CD4-positive, alpha-beta T cell (primary cell): ENCODE measurements at regions of chr4 and their contacts with region 1.

Region 1: GRCh38 chr4:77203380-77204197 is 46.6 kb downstream of the CCNG2 start:
- DNase-seq: peak; percentile 36 to 85 (median 56)
- ATAC-seq: peak; percentile 74
- H3K4me3 ChIP-seq: no peak overlapping the region
- H3K4me3 Mint-ChIP-seq: no peak overlapping the region
- H3K27ac ChIP-seq: no peak overlapping the region
- H3K27ac Mint-ChIP-seq: no peak overlapping the region
- H3K4me1 ChIP-seq: peaks cover 4% of the 10 kb centered on the region
- H3K4me1 Mint-ChIP-seq: no peaks in the 10 kb centered on the region
- H3K27me3 ChIP-seq: no peaks in the 10 kb centered on the region
- H3K27me3 Mint-ChIP-seq: no peaks in the 10 kb centered on the region
- CTCF ChIP-seq: peak; percentile 89

Region 2: GRCh38 chr4:76430519-76431388 is 772.8 kb before region 1 on chr4:
- CTCF ChIA-PET with region 1: interaction called, 3 read pairs
- POLR2A ChIA-PET with region 1: no interaction called
- intact Hi-C with region 1: loop called (anchors 1 to 2 kb)
- DNase-seq: peak in 4 of 14 experiments; percentile 3 to 57 (median 40)
- ATAC-seq: no peak
- H3K4me3 ChIP-seq: no peak overlapping the region
- H3K4me3 Mint-ChIP-seq: no peak overlapping the region
- H3K27ac ChIP-seq: no peak overlapping the region
- H3K27ac Mint-ChIP-seq: no peak overlapping the region
- H3K4me1 ChIP-seq: peaks cover 3% of the 10 kb centered on the region
- H3K4me1 Mint-ChIP-seq: no peaks in the 10 kb centered on the region
- H3K27me3 ChIP-seq: peaks cover 2 to 8% of the 10 kb centered on the region in 2 experiments
- H3K27me3 Mint-ChIP-seq: peaks cover 16% of the 10 kb centered on the region
- CTCF ChIP-seq: peak; percentile 79

Region 3: DNA sequence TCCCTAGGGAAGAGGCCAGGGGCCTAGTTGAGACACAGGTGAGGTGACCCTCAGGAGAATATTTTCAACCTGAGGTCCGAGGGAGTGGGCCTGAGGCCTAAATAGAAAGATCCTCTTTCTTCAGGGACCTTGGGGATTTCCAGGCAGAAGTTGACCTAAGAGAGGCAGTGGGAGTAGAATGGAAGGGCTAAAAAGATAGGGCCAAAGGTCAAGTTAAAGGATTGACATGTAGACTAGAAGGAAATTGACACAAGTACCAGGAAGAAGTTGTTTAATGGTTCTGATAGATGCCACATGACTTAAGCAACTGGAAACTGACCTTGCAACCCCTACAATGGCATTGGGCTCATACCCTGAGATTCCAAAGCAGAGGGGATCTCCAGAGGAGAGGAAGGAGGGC is 691.6 kb before region 1 on chr4:
- CTCF ChIA-PET with region 1: no interaction called
- POLR2A ChIA-PET with region 1: no interaction called
- intact Hi-C with region 1: loop called in 1 of 2 experiments (anchors 2 kb)
- DNase-seq: no peak
- ATAC-seq: no peak
- H3K4me3 ChIP-seq: no peak overlapping the region
- H3K4me3 Mint-ChIP-seq: no peak overlapping the region
- H3K27ac ChIP-seq: no peak overlapping the region
- H3K27ac Mint-ChIP-seq: no peak overlapping the region
- H3K4me1 ChIP-seq: no peaks in the 10 kb centered on the region
- H3K4me1 Mint-ChIP-seq: no peaks in the 10 kb centered on the region
- H3K27me3 ChIP-seq: peaks cover 0 to 3% of the 10 kb centered on the region in 2 experiments
- H3K27me3 Mint-ChIP-seq: peaks cover 8% of the 10 kb centered on the region
- CTCF ChIP-seq: no peak

Region 4: GRCh38 chr4:76803522-76803921 is 400.1 kb before region 1 on chr4:
- CTCF ChIA-PET with region 1: no interaction called
- POLR2A ChIA-PET with region 1: no interaction called
- intact Hi-C with region 1: no loop called
- DNase-seq: no peak
- ATAC-seq: no peak
- H3K4me3 ChIP-seq: no peak overlapping the region
- H3K4me3 Mint-ChIP-seq: no peak overlapping the region
- H3K27ac ChIP-seq: no peak overlapping the region
- H3K27ac Mint-ChIP-seq: no peak overlapping the region
- H3K4me1 ChIP-seq: no peaks in the 10 kb centered on the region
- H3K4me1 Mint-ChIP-seq: no peaks in the 10 kb centered on the region
- H3K27me3 ChIP-seq: peaks cover 5% of the 10 kb centered on the region in 2 experiments
- H3K27me3 Mint-ChIP-seq: peaks cover 15% of the 10 kb centered on the region
- CTCF ChIP-seq: no peak

Region 5: GRCh38 chr4:76949276-76950051 is 254.1 kb before region 1 on chr4 and contains the start of gene SEPTIN11:
- CTCF ChIA-PET with region 1: no interaction called
- POLR2A ChIA-PET with region 1: no interaction called
- intact Hi-C with region 1: loop called in 1 of 2 experiments (anchors 10 kb)
- DNase-seq: peak; percentile 65 to 93 (median 78)
- ATAC-seq: peak; percentile 79
- H3K4me3 ChIP-seq: peak within 1 kb of the TSS; percentile 75
- H3K4me3 Mint-ChIP-seq: peak within 1 kb of the TSS; percentile 89
- H3K27ac ChIP-seq: no peak within 1 kb of the TSS
- H3K27ac Mint-ChIP-seq: peak within 1 kb of the TSS; percentile 76
- H3K4me1 ChIP-seq: peaks cover 27% of the 10 kb centered on the region
- H3K4me1 Mint-ChIP-seq: peaks cover 21% of the 10 kb centered on the region
- H3K27me3 ChIP-seq: no peaks in the 10 kb centered on the region
- H3K27me3 Mint-ChIP-seq: no peaks in the 10 kb centered on the region
- CTCF ChIP-seq: no peak
- total RNA-seq, gene SEPTIN11: 8.1 to 9.4 TPM

Region 6: DNA sequence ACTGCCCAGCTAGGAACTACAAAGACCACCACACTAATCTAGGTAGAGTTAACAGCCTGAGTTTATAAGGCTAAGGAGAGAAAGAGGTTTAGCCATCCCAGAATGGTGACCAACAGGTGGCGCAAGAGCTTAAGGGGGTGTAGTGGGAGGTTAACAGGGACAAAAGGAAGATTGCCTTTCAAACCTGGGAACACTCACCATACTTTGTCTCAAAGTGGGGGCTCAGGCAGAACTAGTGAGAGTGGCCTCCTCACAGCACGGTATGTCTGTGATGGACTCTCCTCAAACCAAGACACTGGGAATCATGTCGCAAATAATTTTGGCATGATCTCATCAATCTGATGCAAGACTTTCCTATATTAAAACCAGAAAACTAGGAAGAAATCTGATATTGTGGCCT is 151.2 kb before region 1 on chr4:
- CTCF ChIA-PET with region 1: interaction called, 11 read pairs
- POLR2A ChIA-PET with region 1: interaction called, 5 read pairs
- intact Hi-C with region 1: loop called (anchors 1 kb)
- DNase-seq: peak; percentile 35 to 77 (median 60)
- ATAC-seq: peak; percentile 54
- H3K4me3 ChIP-seq: no peak overlapping the region
- H3K4me3 Mint-ChIP-seq: no peak overlapping the region
- H3K27ac ChIP-seq: no peak overlapping the region
- H3K27ac Mint-ChIP-seq: peak overlapping the region; percentile 56
- H3K4me1 ChIP-seq: no peaks in the 10 kb centered on the region
- H3K4me1 Mint-ChIP-seq: peaks cover 8% of the 10 kb centered on the region
- H3K27me3 ChIP-seq: no peaks in the 10 kb centered on the region
- H3K27me3 Mint-ChIP-seq: no peaks in the 10 kb centered on the region
- CTCF ChIP-seq: peak; percentile 29

Region 7: DNA sequence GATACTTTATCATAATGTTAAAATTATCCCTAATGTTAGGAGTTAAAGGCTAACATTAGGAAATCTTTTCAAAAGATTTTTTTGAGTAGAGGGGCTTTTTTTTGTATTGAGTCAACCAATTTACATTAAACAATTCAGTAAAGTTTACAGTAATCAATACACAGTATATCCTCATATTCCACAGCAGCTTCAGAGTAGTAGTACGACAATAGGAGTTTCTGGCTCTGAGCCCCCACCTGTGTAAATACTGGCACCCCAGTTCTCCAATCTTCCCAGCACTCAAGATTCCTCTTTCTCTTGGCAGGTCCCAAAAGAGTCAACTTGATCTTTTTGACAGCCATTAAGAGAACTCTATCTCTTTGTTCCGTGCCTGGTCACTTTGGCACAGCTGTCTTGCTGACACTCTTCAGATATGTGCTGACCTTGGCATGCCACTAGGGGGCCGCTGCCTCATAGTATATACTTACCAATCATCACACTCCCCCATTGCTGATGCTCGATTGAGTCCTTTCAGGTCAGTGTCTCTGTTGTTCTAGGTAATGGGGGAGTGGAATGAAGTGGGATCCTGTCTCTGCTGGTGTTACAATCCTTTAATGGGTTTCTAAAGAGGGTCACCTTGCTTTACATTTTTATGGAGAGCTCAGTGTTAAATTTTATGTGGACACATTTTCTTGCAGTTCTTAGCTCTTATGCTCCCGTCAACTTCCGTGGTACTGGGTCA is 108.3 kb before region 1 on chr4:
- CTCF ChIA-PET with region 1: interaction called, 38 read pairs
- POLR2A ChIA-PET with region 1: interaction called, 5 read pairs
- intact Hi-C with region 1: loop called (anchors 1 kb)
- DNase-seq: peak; percentile 40 to 82 (median 65)
- ATAC-seq: peak; percentile 87
- H3K4me3 ChIP-seq: no peak overlapping the region
- H3K4me3 Mint-ChIP-seq: no peak overlapping the region
- H3K27ac ChIP-seq: no peak overlapping the region
- H3K27ac Mint-ChIP-seq: no peak overlapping the region
- H3K4me1 ChIP-seq: peaks cover 3% of the 10 kb centered on the region
- H3K4me1 Mint-ChIP-seq: peaks cover 19% of the 10 kb centered on the region
- H3K27me3 ChIP-seq: no peaks in the 10 kb centered on the region
- H3K27me3 Mint-ChIP-seq: no peaks in the 10 kb centered on the region
- CTCF ChIP-seq: peak; percentile 65